AG04450 (cell line): ENCODE measurements at regions of chr9 and their contacts with region 1.

Region 1: DNA sequence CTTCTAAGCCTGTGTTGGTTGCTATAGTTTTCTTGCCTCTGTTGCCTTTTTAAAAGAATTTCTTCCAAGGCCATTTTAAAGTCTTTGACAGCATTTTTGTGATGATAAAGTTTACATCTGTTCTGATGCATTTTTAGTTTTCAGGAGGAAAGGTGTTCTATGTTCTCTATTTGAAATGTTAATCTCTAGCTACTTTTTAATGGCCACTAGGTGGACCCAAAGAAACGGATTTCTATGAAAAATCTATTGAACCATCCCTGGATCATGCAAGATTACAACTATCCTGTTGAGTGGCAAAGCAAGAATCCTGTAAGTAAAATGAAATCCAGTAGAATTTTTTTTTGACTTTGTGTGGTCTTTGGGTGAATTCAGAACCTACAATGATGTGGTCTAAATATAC is 60.2 kb downstream of the MELK start:
- DNase-seq: peak; percentile 10
- H3K4me3 ChIP-seq: no peak overlapping the region
- H3K27ac ChIP-seq: no peak overlapping the region
- H3K27me3 ChIP-seq: no peaks in the 10 kb centered on the region
- CTCF ChIP-seq: peak; percentile 60

Region 2: GRCh38 chr9:36597412-36598178 is 35.3 kb before region 1 on chr9:
- CTCF ChIA-PET with region 1: interaction called, 10 read pairs
- POLR2A ChIA-PET with region 1: no interaction called
- DNase-seq: no peak
- H3K4me3 ChIP-seq: no peak overlapping the region
- H3K27ac ChIP-seq: no peak overlapping the region
- H3K27me3 ChIP-seq: no peaks in the 10 kb centered on the region
- CTCF ChIP-seq: peak; percentile 78

Region 3: DNA sequence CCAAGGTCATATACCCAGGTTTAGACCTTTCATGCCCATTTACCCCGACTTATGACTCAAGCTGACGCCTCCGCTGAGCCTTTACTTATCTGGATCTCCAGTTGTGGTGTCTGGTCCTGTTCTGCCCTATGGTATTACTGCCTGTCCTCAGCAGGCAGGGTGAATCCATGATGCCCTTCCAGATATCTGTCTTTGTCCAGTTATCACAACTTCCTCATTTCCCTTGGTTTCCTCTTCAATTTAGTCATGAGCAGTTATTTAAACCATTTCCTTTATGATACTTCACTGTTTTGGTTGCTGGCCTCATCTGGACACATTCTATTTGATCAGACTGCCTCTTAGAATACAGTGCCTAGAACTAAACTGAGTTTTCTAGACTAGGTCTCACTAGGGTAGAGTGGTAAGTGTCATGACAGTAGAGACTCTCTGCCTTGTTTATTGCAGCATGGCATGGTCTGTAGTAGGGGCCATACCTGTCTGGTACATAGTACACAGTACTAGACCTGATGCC is 33.1 kb after region 1 on chr9:
- CTCF ChIA-PET with region 1: interaction called, 10 read pairs
- POLR2A ChIA-PET with region 1: no interaction called
- DNase-seq: no peak
- H3K4me3 ChIP-seq: no peak overlapping the region
- H3K27ac ChIP-seq: no peak overlapping the region
- H3K27me3 ChIP-seq: no peaks in the 10 kb centered on the region
- CTCF ChIP-seq: no peak

Region 4: GRCh38 chr9:36698984-36699383 is 66.1 kb after region 1 on chr9:
- CTCF ChIA-PET with region 1: no interaction called
- POLR2A ChIA-PET with region 1: no interaction called
- DNase-seq: no peak
- H3K4me3 ChIP-seq: no peak overlapping the region
- H3K27ac ChIP-seq: no peak overlapping the region
- H3K27me3 ChIP-seq: peaks cover 15% of the 10 kb centered on the region
- CTCF ChIP-seq: no peak

Region 5: GRCh38 chr9:36716496-36716895 is 83.6 kb after region 1 on chr9:
- CTCF ChIA-PET with region 1: no interaction called
- POLR2A ChIA-PET with region 1: no interaction called
- DNase-seq: no peak
- H3K4me3 ChIP-seq: no peak overlapping the region
- H3K27ac ChIP-seq: no peak overlapping the region
- H3K27me3 ChIP-seq: peaks cover 11% of the 10 kb centered on the region
- CTCF ChIP-seq: no peak

Region 6: DNA sequence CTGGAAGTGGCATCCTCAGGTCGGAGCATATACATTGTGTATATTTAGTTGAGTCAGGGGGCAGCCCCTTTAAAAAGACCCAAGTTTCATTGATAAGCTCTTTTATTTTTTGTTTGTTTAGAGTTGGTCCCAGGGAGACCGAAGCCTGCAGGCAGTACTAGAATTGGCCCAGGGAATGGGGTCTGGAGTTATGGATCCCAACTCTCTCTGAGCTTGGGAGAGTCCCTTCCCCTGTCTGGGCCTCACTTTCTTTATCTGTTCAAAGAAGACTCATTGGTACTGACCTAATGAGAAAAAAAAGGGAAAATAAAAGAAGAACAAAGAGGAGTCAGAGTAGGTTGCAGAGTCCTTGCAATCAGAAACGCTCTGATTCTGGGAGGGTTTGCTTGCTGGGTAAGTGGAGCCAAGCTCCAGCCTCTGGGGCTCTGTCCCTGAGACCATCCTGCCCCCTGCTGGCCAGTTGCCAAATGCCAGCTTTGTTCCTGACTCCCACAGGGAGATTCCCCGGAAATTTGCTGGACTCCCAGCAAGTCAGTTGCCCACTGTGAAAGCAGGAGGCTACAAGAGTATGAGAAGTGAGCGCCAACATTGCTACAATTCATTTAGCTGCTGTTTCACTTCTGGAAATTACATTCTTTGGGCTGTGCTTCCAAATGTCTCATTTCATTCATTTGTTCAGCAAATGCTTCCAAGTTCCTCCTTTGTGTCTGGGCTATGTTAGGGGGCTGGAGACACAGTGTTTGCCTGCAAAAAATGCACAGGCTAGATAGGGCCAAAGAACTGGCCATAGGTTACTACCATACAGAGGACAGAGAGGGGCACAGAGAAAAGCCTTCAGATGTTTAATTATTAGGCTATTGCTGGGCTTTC is 96.0 kb after region 1 on chr9:
- CTCF ChIA-PET with region 1: interaction called, 64 read pairs
- POLR2A ChIA-PET with region 1: no interaction called
- DNase-seq: peak; percentile 66
- H3K4me3 ChIP-seq: no peak overlapping the region
- H3K27ac ChIP-seq: no peak overlapping the region
- H3K27me3 ChIP-seq: no peaks in the 10 kb centered on the region
- CTCF ChIP-seq: peak; percentile 84

Region 7: GRCh38 chr9:36772450-36773403 is 139.8 kb after region 1 on chr9:
- CTCF ChIA-PET with region 1: no interaction called
- POLR2A ChIA-PET with region 1: no interaction called
- DNase-seq: no peak
- H3K4me3 ChIP-seq: no peak overlapping the region
- H3K27ac ChIP-seq: no peak overlapping the region
- H3K27me3 ChIP-seq: peaks cover 13% of the 10 kb centered on the region
- CTCF ChIP-seq: no peak

Region 8: DNA sequence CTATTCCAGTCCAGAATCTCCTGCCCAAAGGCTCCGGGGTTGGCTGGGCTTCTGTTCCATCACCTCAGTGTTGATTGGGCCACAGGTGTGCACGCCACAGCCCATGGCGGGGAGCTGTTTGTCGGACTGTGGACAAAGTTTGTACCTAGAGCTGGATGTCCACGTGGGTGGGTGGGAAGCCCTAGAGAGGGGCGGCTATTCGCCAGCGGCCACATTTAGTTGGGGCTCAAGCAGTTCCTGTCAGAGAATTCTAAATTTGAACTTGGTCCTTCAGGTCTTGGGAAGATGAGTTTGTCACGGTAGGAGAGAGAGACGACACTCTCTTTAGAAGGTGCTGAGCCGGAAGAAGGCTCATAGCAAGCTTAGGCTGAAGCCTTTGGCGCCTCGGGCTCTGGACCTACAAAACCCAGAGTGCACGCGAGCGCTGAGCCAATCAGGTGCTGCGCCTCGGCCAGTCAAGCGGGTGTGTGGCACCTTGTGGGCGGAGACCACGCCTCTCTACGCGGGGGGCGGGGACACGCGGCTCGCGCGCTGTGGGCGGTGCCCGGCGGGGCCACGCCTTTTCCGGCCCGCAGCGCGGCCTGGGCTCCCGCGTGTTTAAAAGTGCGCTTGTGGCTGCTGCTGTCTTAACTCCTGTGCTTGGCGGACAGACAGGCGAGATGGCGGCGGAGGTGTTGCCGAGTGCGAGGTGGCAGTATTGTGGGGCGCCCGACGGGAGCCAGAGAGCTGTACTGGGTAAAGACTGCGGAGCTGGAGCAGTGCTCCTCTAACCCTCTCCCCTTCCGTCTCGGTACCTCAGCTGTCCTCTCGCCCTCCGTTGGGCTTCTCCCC is 852.7 kb after region 1 on chr9 and contains the start of gene POLR1E:
- CTCF ChIA-PET with region 1: interaction called, 11 read pairs
- POLR2A ChIA-PET with region 1: no interaction called
- DNase-seq: peak; percentile 76
- H3K4me3 ChIP-seq: peak within 1 kb of the TSS; percentile 95
- H3K27ac ChIP-seq: peak within 1 kb of the TSS; percentile 97
- H3K27me3 ChIP-seq: peaks cover 2% of the 10 kb centered on the region
- CTCF ChIP-seq: no peak
- polyA plus RNA-seq, gene POLR1E: 42.2 and 44.5 TPM in 2 replicates